Upper lobe of right lung (tissue), 1 donor: ENCODE measurements at regions of chr14 and their contacts with region 1.

Region 1: DNA sequence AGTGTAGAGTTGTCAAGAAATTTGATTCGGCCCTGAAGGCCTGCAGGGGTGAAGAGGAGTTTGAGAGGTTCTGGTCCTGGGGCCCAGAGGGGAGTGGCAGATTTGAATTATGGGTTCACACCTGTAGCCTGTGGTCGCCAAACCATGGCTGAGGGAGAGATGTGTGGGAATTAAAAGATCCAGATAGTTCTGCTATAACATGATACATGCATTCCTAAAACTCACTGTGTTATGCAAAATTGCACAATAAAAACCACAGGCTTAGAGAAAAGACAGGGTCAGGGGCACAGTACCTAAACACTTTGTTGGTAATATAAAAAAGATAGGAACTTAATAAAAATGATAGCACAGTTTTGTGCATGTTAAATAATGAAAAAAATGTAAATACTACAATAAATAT is 106.2 kb downstream of the TMEM30B start:
- DNase-seq: no peak
- ATAC-seq: no peak
- H3K4me3 ChIP-seq: no peak overlapping the region
- H3K27ac ChIP-seq: no peak overlapping the region
- H3K4me1 ChIP-seq: no peaks in the 10 kb centered on the region
- H3K27me3 ChIP-seq: no peaks in the 10 kb centered on the region
- CTCF ChIP-seq: no peak

Region 2: DNA sequence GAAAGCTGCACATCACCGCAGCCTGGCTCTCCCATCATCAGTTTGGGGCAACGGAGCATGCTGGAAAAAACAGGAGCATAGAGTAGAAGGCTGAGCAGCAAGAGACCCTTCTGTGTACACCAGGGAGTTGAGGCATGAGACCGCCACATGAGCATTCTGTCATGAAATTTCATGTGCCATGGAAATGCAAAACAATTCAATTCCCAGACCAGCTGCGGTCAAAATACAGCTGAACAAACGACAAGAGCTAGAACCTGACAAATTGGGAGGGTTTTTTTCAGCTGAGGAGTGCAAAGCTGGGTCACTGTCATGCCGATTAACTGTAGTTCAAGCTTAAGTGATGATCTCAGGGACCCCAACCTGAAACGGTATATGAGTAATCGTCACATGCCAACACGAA is 69.0 kb after region 1 on chr14:
- intact Hi-C with region 1: loop called (anchors 5 kb)
- DNase-seq: no peak
- ATAC-seq: no peak
- H3K4me3 ChIP-seq: no peak overlapping the region
- H3K27ac ChIP-seq: no peak overlapping the region
- H3K4me1 ChIP-seq: no peaks in the 10 kb centered on the region
- H3K27me3 ChIP-seq: peaks cover 4% of the 10 kb centered on the region
- CTCF ChIP-seq: no peak